ENCODE measurements at regions of chr4 and their contacts with region 1.

Region 1: GRCh38 chr4:89365776-89366175 is 58.2 kb upstream of the GPRIN3 start:
- DNase-seq: no peak
- ATAC-seq: no peak
- H3K4me3 ChIP-seq: no peak overlapping the region
- H3K4me3 Mint-ChIP-seq: no peak overlapping the region
- H3K27ac ChIP-seq: no peak overlapping the region
- H3K27ac Mint-ChIP-seq: no peak overlapping the region
- H3K4me1 ChIP-seq: no peaks in the 10 kb centered on the region
- H3K4me1 Mint-ChIP-seq: peaks cover 8% of the 10 kb centered on the region
- H3K27me3 ChIP-seq: no peaks in the 10 kb centered on the region
- H3K27me3 Mint-ChIP-seq: no peaks in the 10 kb centered on the region
- CTCF ChIP-seq: no peak

Region 2: GRCh38 chr4:89404531-89404930 is 38.8 kb after region 1 on chr4:
- CTCF ChIA-PET with region 1: no interaction called
- POLR2A ChIA-PET with region 1: no interaction called
- intact Hi-C with region 1: loop called in 1 of 2 experiments (anchors 5 kb)
- DNase-seq: no peak
- ATAC-seq: no peak
- H3K4me3 ChIP-seq: no peak overlapping the region
- H3K4me3 Mint-ChIP-seq: no peak overlapping the region
- H3K27ac ChIP-seq: no peak overlapping the region
- H3K27ac Mint-ChIP-seq: no peak overlapping the region
- H3K4me1 ChIP-seq: no peaks in the 10 kb centered on the region
- H3K4me1 Mint-ChIP-seq: no peaks in the 10 kb centered on the region
- H3K27me3 ChIP-seq: no peaks in the 10 kb centered on the region
- H3K27me3 Mint-ChIP-seq: no peaks in the 10 kb centered on the region
- CTCF ChIP-seq: no peak